CD4-positive, alpha-beta T cell (primary cell): ENCODE measurements at regions of chr5 and their contacts with region 1.

Region 1: GRCh38 chr5:178732281-178732680 is 1.8 kb upstream of the ZNF354A start:
- DNase-seq: no peak
- ATAC-seq: no peak
- H3K4me3 ChIP-seq: no peak overlapping the region
- H3K4me3 Mint-ChIP-seq: peak overlapping the region; percentile 48
- H3K27ac ChIP-seq: no peak overlapping the region
- H3K27ac Mint-ChIP-seq: no peak overlapping the region
- H3K4me1 ChIP-seq: peaks cover 14% of the 10 kb centered on the region
- H3K4me1 Mint-ChIP-seq: peaks cover 8% of the 10 kb centered on the region
- H3K27me3 ChIP-seq: no peaks in the 10 kb centered on the region
- H3K27me3 Mint-ChIP-seq: no peaks in the 10 kb centered on the region
- CTCF ChIP-seq: no peak

Region 2: DNA sequence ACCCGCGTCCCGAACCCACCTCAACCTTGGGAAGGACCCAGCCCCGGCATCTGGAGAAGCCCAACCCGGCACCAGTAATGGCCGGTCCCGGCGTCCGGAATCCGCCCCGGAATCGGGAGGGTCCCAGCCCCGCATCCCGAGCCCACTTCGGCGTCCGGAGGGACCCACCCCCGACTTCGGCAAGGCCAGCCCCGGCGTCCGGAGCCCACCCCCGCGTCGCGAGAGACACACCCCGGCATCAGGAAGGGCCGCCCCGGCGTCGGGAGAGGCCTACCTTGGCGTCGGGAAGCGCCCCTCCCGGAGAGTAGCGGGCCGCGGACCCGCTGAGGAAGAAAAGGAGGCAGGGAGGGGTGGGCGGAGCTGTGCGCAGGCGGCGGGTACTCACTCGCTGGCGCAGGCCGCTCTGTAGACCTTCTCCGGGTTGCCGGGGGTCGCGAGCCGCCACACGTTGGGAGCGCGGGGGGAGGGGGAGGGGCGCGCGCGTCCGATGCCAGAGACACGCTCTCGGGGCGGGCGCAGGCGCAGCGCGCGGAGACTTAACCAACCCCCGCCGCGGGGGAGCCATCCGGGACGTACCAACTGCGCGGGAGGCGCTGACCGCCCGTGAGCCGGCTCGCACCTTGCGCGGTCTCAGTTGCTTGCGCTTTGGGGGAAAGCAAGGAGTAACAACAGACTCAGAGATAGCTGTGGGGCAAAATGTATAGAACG is 1725.9 kb before region 1 on chr5 and contains the start of gene UIMC1:
- CTCF ChIA-PET with region 1: no interaction called
- POLR2A ChIA-PET with region 1: no interaction called
- intact Hi-C with region 1: loop called in 1 of 2 experiments (anchors 10 kb)
- DNase-seq: peak; percentile 84 to 96 (median 89)
- ATAC-seq: peak; percentile 83
- H3K4me3 ChIP-seq: peak within 1 kb of the TSS; percentile 91
- H3K4me3 Mint-ChIP-seq: peak within 1 kb of the TSS; percentile 99
- H3K27ac ChIP-seq: peak within 1 kb of the TSS; percentile 70 to 72
- H3K27ac Mint-ChIP-seq: peak within 1 kb of the TSS; percentile 95
- H3K4me1 ChIP-seq: peaks cover 32% of the 10 kb centered on the region
- H3K4me1 Mint-ChIP-seq: peaks cover 35% of the 10 kb centered on the region
- H3K27me3 ChIP-seq: no peaks in the 10 kb centered on the region
- H3K27me3 Mint-ChIP-seq: no peaks in the 10 kb centered on the region
- CTCF ChIP-seq: no peak
- total RNA-seq, gene UIMC1: 42.3 to 50.8 TPM

Region 3: DNA sequence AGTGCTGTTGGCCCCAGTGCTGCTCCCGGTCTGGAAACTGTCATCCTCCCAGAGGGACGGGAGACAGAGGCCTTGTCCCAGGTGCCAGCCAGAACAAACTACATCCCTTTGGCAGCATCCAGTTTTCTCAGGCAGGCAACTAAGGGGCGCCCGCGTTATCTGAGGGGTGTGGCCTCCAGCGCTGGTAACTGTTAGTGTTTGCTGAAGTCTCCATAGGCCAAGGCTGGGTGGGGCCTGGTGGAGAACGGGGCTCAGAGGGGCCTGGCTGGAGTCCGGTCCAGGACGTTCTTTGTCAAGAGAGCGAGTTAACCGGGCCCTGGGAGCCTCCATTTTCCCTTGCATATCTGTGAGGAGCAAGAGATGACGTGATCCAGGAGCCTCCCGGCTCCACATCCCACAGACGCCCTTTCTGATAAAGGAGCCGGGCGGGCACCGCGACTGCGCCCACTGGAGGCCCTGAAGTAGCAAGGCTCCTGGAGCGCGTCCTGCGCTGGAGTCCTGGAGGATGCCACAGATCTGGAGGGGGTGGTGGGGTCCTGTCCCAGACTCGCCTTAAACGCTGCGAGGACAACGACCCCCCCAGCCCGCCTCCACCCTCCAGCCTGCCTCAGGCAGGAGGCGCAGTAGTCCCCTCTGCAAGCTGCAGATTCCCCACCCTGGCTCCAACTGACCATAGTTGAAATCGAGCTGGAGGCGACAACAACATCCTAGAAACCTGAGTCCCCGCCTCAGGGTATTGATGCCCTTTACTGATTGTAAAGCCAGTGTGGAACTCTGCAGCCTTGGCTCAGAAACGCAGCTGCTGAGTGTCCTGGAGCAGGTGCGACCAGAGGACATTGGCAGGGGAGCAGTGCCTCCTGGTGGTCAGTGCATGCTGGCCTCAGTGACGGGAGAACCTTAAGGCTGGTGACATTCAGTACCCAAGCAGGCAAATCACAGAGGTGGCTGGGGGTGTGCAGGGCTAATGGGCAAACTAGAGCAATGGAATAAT is 106.7 kb after region 1 on chr5:
- CTCF ChIA-PET with region 1: no interaction called
- POLR2A ChIA-PET with region 1: no interaction called
- intact Hi-C with region 1: loop called in 1 of 2 experiments (anchors 1 kb)
- DNase-seq: peak; percentile 10 to 71 (median 36)
- ATAC-seq: peak; percentile 55
- H3K4me3 ChIP-seq: no peak overlapping the region
- H3K4me3 Mint-ChIP-seq: no peak overlapping the region
- H3K27ac ChIP-seq: no peak overlapping the region
- H3K27ac Mint-ChIP-seq: no peak overlapping the region
- H3K4me1 ChIP-seq: no peaks in the 10 kb centered on the region
- H3K4me1 Mint-ChIP-seq: no peaks in the 10 kb centered on the region
- H3K27me3 ChIP-seq: no peaks in the 10 kb centered on the region
- H3K27me3 Mint-ChIP-seq: no peaks in the 10 kb centered on the region
- CTCF ChIP-seq: peak; percentile 56

Region 4: GRCh38 chr5:178859625-178860531 is 127.6 kb after region 1 on chr5 and contains the start of gene ZNF354B:
- CTCF ChIA-PET with region 1: interaction called, 23 read pairs
- POLR2A ChIA-PET with region 1: interaction called, 36 read pairs
- intact Hi-C with region 1: loop called (anchors 1 kb)
- DNase-seq: peak; percentile 65 to 94 (median 78)
- ATAC-seq: peak; percentile 98
- H3K4me3 ChIP-seq: peak within 1 kb of the TSS; percentile 60
- H3K4me3 Mint-ChIP-seq: peak within 1 kb of the TSS; percentile 84
- H3K27ac ChIP-seq: peak within 1 kb of the TSS; percentile 1 to 46
- H3K27ac Mint-ChIP-seq: peak within 1 kb of the TSS; percentile 82
- H3K4me1 ChIP-seq: peaks cover 16% of the 10 kb centered on the region
- H3K4me1 Mint-ChIP-seq: peaks cover 36% of the 10 kb centered on the region
- H3K27me3 ChIP-seq: peaks cover 0 to under 1% of the 10 kb centered on the region in 2 experiments
- H3K27me3 Mint-ChIP-seq: no peaks in the 10 kb centered on the region
- CTCF ChIP-seq: no peak
- total RNA-seq, gene ZNF354B: 6.2 to 6.3 TPM

Region 5: GRCh38 chr5:179023528-179024430 is 291.5 kb after region 1 on chr5 and contains the start of gene ZNF879:
- CTCF ChIA-PET with region 1: interaction called, 7 read pairs
- POLR2A ChIA-PET with region 1: interaction called, 7 read pairs
- intact Hi-C with region 1: loop called (anchors 1 to 2 kb)
- DNase-seq: peak; percentile 90 to 97 (median 94)
- ATAC-seq: peak; percentile 94
- H3K4me3 ChIP-seq: peak within 1 kb of the TSS; percentile 64
- H3K4me3 Mint-ChIP-seq: peak within 1 kb of the TSS; percentile 95
- H3K27ac ChIP-seq: no peak within 1 kb of the TSS
- H3K27ac Mint-ChIP-seq: peak within 1 kb of the TSS; percentile 83
- H3K4me1 ChIP-seq: peaks cover 22% of the 10 kb centered on the region
- H3K4me1 Mint-ChIP-seq: peaks cover 16% of the 10 kb centered on the region
- H3K27me3 ChIP-seq: no peaks in the 10 kb centered on the region
- H3K27me3 Mint-ChIP-seq: peaks cover 4% of the 10 kb centered on the region
- CTCF ChIP-seq: no peak
- total RNA-seq, gene ZNF879: 4.9 to 5.1 TPM

Region 6: GRCh38 chr5:179060116-179061008 is 328.1 kb after region 1 on chr5 and contains the start of gene ZNF354C:
- CTCF ChIA-PET with region 1: interaction called, 20 read pairs
- POLR2A ChIA-PET with region 1: interaction called, 31 read pairs
- intact Hi-C with region 1: loop called (anchors 1 kb)
- DNase-seq: peak; percentile 73 to 91 (median 82)
- ATAC-seq: peak; percentile 97
- H3K4me3 ChIP-seq: peak within 1 kb of the TSS; percentile 75
- H3K4me3 Mint-ChIP-seq: peak within 1 kb of the TSS; percentile 96
- H3K27ac ChIP-seq: peak within 1 kb of the TSS; percentile 47 to 61
- H3K27ac Mint-ChIP-seq: peak within 1 kb of the TSS; percentile 95
- H3K4me1 ChIP-seq: peaks cover 15% of the 10 kb centered on the region
- H3K4me1 Mint-ChIP-seq: peaks cover 34% of the 10 kb centered on the region
- H3K27me3 ChIP-seq: no peaks in the 10 kb centered on the region
- H3K27me3 Mint-ChIP-seq: peaks cover 9% of the 10 kb centered on the region
- CTCF ChIP-seq: no peak
- total RNA-seq, gene ZNF354C: 2.5 to 2.9 TPM

Region 7: DNA sequence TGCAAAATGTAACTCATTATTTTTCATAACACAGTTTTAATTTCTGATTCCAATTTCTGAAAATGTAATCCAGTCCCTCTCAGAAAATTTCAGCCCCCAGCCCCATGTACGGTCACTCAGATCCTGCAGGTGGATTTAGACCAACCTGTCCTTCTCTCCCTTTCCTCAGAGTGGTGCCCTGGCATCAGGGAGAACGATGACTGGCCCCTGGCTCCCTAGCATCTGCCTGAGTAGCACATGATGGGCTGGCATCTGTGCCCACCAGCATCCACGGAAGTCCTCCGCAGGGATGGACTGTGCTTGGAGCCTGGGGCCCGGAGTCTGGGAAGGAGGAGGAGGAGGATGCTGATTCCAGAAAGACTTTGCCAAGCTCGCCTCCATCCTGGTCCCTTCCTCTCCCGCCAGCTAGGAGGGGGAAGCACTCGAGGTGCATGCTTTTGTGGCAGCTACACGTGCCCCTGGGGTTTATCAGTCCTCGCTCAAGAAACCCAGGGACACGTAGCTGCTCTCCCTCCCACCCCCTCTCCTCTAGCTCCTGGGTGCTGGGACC is 763.7 kb after region 1 on chr5:
- CTCF ChIA-PET with region 1: no interaction called
- POLR2A ChIA-PET with region 1: no interaction called
- intact Hi-C with region 1: loop called (anchors 2 to 5 kb)
- DNase-seq: no peak
- ATAC-seq: no peak
- H3K4me3 ChIP-seq: no peak overlapping the region
- H3K4me3 Mint-ChIP-seq: no peak overlapping the region
- H3K27ac ChIP-seq: no peak overlapping the region
- H3K27ac Mint-ChIP-seq: no peak overlapping the region
- H3K4me1 ChIP-seq: no peaks in the 10 kb centered on the region
- H3K4me1 Mint-ChIP-seq: no peaks in the 10 kb centered on the region
- H3K27me3 ChIP-seq: no peaks in the 10 kb centered on the region
- H3K27me3 Mint-ChIP-seq: peaks cover 5% of the 10 kb centered on the region
- CTCF ChIP-seq: no peak